Dorsolateral prefrontal cortex (tissue), 120 donors: ENCODE measurements at regions of chr12 and their contacts with region 1.

Region 1: DNA sequence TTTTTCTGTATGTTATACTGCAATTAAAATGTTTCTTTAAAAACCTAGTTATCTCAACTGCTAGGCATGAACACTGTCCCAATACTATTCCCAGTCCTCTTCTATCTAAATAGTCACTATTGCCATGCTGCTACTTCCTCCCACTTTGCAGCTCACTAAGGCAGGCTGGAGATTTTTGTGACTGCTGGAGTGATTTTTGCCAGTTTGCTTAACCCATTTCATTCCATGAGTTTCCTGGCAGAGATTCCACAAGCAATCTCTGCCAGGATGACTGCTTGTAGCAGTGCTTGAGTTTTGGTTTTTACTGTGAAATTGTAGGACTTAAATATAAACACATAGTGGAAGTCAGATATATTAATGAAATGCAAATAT is 80.8 kb downstream of the BHLHE41 start:
- DNase-seq: no peak
- H3K4me3 ChIP-seq: peak overlapping the region in 53 of 59 donors; percentile 6 to 63 (median 41)
- H3K27ac ChIP-seq: peak overlapping the region in 50 of 59 donors; percentile 17 to 84 (median 72)
- H3K27me3 ChIP-seq: no peaks in the 10 kb centered on the region
- CTCF ChIP-seq: no peak

Region 2: GRCh38 chr12:26097046-26097878 is 53.3 kb after region 1 on chr12:
- intact Hi-C with region 1: loop called in 1 of 2 experiments (anchors 10 kb)
- DNase-seq: peak; percentile 51 to 81 (median 70)
- H3K4me3 ChIP-seq: peak overlapping the region in 3 of 59 donors; percentile 2 to 20 (median 11)
- H3K27ac ChIP-seq: peak overlapping the region in 10 of 59 donors; percentile 7 to 65 (median 30)
- H3K27me3 ChIP-seq: no peaks in the 10 kb centered on the region
- CTCF ChIP-seq: peak; percentile 79 to 99 (median 93)